ENCODE measurements at regions of chr7 and their contacts with region 1.

Region 1: GRCh38 chr7:122532406-122533269 is 166.3 kb downstream of the RNF133 start:
- DNase-seq: no peak
- H3K4me3 ChIP-seq: no peak overlapping the region
- H3K27ac ChIP-seq: no peak overlapping the region
- H3K27me3 ChIP-seq: no peaks in the 10 kb centered on the region
- CTCF ChIP-seq: peak in 55 of 56 donors; percentile 25 to 72 (median 51)

Region 2: DNA sequence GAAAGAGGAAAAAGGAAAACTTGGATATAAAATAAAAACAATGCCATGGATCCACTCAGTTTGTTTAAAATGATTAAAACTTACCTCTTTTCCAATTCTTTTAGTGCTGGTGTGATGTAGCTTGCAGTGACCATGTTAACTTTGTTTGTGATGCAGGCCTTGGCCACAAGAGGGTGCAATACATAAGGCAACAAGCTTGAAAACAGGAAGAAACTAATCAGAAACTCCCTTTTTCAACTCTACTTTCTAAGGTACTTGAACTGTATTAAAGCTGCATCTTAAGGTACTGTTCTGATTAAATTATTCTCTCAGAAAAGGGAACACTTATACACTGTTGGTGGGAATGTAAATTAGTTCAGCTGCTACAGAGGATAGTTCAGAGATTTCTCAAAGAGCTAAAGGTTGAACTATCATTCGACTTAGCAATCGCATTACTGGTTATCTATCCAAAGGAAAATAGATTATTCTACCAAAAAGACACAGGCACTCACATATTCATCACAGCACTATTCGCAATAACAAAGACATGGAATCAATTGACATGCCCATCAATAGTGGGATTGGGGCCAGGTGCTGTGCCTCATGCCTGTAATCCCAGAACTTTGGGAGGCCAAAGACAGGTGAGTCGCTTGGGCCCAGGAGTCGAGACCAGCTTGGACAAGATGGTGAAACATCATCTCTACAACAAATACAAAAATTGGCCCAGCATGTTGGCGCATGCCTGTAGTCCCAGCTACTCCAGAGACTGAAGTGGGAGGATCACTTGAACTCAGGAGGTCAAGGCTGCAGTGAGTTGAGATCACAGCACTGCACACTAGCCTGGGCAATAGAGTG is 439.5 kb before region 1 on chr7:
- intact Hi-C with region 1: loop called in 1 of 2 experiments (anchors 10 kb)
- DNase-seq: peak in 8 of 10 donors; percentile 11 to 81 (median 54)
- H3K4me3 ChIP-seq: no peak overlapping the region
- H3K27ac ChIP-seq: no peak overlapping the region
- H3K27me3 ChIP-seq: no peaks in the 10 kb centered on the region
- CTCF ChIP-seq: peak; percentile 61 to 88 (median 80)

Region 3: DNA sequence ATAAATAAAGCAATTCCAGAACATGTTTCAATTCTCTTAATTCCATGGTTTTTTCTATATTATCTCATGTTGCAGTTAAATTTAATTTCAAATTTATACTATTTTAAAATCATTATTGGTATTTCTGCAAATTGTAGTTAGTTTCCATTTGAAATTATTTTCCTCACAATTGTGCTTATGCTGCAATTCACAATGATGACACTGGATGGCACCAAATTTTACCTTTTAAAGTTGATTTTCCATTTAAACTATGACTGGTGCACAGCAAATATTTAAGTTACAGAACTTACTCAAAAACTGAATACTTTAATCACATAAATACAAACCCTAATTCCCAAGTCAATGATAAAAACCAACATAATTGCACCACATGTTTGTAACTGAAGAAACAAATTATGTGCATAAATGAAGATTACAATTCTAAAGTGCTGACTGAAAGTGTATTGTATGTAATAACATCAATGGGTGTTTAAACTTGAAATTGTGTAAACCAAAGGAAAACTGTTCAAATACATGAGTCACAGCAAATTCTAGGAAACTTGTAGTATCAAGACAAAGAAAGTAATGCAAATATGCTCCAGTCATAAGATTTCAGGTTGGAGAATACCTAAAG is 313.3 kb before region 1 on chr7:
- intact Hi-C with region 1: loop called (anchors 5 kb)
- DNase-seq: no peak
- H3K4me3 ChIP-seq: no peak overlapping the region
- H3K27ac ChIP-seq: no peak overlapping the region
- H3K27me3 ChIP-seq: peaks cover 0 to 8% (median 0%) of the 10 kb centered on the region in 45 donors
- CTCF ChIP-seq: peak; percentile 56 to 88 (median 74)

Region 4: DNA sequence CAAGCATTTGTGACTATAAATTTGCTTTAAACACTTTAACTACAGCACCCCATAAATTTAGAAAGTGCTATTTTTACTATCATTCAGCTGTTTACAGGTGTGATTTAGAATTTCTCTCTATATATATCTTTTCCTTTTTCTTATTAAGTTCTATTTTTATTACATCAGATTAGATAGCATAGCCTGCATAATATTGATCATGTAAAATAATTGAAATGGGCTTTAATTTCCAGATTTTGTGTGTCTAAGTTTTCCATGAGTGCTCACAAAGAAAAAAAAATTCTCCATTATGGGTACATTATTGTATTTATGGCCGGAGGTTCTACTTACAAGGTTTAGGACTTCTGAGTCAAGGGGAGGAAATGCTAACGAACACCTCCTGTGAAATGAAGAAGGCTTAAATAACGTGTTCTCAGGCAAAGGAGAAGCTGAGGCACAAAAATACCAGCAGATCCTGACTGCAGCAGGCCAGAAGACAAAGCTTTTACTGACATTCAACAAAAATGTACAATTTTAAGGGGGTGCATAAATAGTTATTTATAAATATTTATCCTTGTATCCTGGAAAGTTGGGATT is 52.1 kb after region 1 on chr7:
- intact Hi-C with region 1: no loop called
- DNase-seq: no peak
- H3K4me3 ChIP-seq: no peak overlapping the region
- H3K27ac ChIP-seq: no peak overlapping the region
- H3K27me3 ChIP-seq: no peaks in the 10 kb centered on the region
- CTCF ChIP-seq: no peak

Measured in dorsolateral prefrontal cortex (tissue), 120 donors.